ENCODE measurements at regions of chr6 and their contacts with region 1.

Region 1: DNA sequence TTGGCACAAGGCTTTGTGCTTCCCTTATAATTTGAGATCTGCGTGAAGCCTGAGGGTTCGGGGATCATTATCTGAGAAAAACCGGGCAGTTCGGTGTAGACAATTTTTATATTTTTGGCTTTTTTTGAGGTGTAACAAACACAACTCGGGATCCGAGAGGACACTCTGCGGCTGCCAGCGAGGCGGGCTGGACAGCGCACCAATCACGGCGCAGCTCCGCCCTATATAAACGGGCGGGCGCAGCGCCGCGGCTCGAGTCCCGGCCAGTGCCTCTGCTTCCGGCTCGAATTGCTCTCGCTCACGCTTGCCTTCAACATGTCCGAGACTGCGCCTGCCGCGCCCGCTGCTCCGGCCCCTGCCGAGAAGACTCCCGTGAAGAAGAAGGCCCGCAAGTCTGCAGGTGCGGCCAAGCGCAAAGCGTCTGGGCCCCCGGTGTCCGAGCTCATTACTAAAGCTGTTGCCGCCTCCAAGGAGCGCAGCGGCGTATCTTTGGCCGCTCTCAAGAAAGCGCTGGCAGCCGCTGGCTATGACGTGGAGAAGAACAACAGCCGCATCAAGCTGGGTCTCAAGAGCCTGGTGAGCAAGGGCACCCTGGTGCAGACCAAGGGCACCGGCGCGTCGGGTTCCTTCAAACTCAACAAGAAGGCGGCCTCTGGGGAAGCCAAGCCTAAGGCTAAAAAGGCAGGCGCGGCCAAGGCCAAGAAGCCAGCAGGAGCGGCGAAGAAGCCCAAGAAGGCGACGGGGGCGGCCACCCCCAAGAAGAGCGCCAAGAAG is 69.0 kb downstream of the HFE start:
- DNase-seq: peak; percentile 87
- ATAC-seq: peak; percentile 41
- H3K4me3 Mint-ChIP-seq: peak overlapping the region; percentile 88
- H3K27ac Mint-ChIP-seq: peak overlapping the region; percentile 93
- H3K4me1 Mint-ChIP-seq: peaks cover 36% of the 10 kb centered on the region
- H3K27me3 Mint-ChIP-seq: peaks cover 14% of the 10 kb centered on the region
- CTCF ChIP-seq: no peak

Region 2: GRCh38 chr6:26025894-26026832 is 130.1 kb before region 1 on chr6:
- CTCF ChIA-PET with region 1: no interaction called
- POLR2A ChIA-PET with region 1: interaction called, 149 read pairs
- intact Hi-C with region 1: no loop called
- DNase-seq: peak; percentile 97
- ATAC-seq: peak; percentile 41
- H3K4me3 Mint-ChIP-seq: peak overlapping the region; percentile 77
- H3K27ac Mint-ChIP-seq: peak overlapping the region; percentile 95
- H3K4me1 Mint-ChIP-seq: peaks cover 51% of the 10 kb centered on the region
- H3K27me3 Mint-ChIP-seq: peaks cover 2% of the 10 kb centered on the region
- CTCF ChIP-seq: peak; percentile 75

Region 3: DNA sequence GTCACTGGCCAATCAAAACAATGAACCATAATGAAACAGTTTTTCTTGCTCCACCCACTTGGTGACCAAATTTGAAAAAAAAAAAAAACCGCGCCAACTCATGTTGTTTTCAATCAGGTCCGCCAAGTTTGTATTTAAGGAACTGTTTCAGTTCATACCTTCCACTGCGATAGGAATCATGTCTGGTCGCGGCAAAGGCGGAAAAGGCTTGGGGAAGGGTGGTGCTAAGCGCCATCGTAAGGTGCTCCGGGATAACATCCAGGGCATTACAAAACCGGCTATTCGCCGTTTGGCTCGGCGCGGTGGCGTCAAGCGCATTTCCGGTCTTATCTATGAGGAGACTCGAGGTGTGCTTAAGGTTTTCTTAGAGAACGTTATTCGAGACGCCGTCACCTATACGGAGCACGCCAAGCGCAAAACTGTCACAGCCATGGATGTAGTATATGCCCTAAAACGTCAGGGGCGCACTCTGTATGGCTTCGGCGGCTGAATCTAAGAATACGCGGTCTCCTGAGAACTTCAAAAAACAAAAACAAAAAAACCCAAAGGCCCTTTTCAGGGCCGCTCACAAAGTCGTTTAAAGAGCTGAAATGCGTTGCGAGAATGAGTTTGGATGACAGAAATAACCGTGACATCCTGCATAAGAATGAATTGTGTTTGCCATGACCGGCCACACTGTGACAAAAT is 52.4 kb before region 1 on chr6:
- CTCF ChIA-PET with region 1: no interaction called
- POLR2A ChIA-PET with region 1: interaction called, 104 read pairs
- intact Hi-C with region 1: no loop called
- DNase-seq: peak; percentile 90
- ATAC-seq: peak; percentile 87
- H3K4me3 Mint-ChIP-seq: peak overlapping the region; percentile 85
- H3K27ac Mint-ChIP-seq: peak overlapping the region; percentile 98
- H3K4me1 Mint-ChIP-seq: peaks cover 15% of the 10 kb centered on the region
- H3K27me3 Mint-ChIP-seq: peaks cover 2% of the 10 kb centered on the region
- CTCF ChIP-seq: peak; percentile 46

Region 4: GRCh38 chr6:26175428-26176181 is 19.3 kb after region 1 on chr6:
- CTCF ChIA-PET with region 1: interaction called, 5 read pairs
- POLR2A ChIA-PET with region 1: interaction called, 286 read pairs
- intact Hi-C with region 1: no loop called
- DNase-seq: peak; percentile 72
- ATAC-seq: peak; percentile 17
- H3K4me3 Mint-ChIP-seq: peak overlapping the region; percentile 46
- H3K27ac Mint-ChIP-seq: peak overlapping the region; percentile 63
- H3K4me1 Mint-ChIP-seq: peaks cover 38% of the 10 kb centered on the region
- H3K27me3 Mint-ChIP-seq: no peaks in the 10 kb centered on the region
- CTCF ChIP-seq: peak; percentile 86

Region 5: DNA sequence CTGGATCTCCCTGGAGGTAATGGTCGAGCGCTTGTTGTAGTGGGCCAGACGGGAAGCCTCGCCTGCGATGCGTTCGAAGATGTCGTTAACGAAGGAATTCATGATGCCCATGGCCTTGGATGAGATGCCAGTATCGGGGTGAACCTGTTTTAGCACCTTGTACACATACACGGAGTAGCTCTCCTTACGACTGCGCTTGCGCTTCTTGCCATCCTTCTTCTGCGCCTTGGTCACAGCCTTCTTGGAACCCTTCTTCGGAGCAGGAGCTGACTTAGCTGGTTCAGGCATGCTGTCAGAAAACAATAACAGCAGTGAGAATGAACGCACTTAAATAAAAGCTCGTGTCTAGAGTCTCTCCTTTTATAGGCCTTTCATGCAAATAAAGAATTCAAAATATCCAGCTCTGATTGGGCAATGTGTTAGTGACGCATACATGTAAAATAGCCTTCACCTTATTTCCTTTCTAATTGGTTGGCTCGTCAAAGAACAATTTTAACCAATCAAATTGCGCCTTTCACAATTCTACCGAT is 60.2 kb after region 1 on chr6:
- CTCF ChIA-PET with region 1: interaction called, 3 read pairs
- POLR2A ChIA-PET with region 1: interaction called, 120 read pairs
- intact Hi-C with region 1: no loop called
- DNase-seq: peak; percentile 87
- ATAC-seq: peak; percentile 80
- H3K4me3 Mint-ChIP-seq: no peak overlapping the region
- H3K27ac Mint-ChIP-seq: no peak overlapping the region
- H3K4me1 Mint-ChIP-seq: peaks cover 11% of the 10 kb centered on the region
- H3K27me3 Mint-ChIP-seq: no peaks in the 10 kb centered on the region
- CTCF ChIP-seq: no peak

Region 6: DNA sequence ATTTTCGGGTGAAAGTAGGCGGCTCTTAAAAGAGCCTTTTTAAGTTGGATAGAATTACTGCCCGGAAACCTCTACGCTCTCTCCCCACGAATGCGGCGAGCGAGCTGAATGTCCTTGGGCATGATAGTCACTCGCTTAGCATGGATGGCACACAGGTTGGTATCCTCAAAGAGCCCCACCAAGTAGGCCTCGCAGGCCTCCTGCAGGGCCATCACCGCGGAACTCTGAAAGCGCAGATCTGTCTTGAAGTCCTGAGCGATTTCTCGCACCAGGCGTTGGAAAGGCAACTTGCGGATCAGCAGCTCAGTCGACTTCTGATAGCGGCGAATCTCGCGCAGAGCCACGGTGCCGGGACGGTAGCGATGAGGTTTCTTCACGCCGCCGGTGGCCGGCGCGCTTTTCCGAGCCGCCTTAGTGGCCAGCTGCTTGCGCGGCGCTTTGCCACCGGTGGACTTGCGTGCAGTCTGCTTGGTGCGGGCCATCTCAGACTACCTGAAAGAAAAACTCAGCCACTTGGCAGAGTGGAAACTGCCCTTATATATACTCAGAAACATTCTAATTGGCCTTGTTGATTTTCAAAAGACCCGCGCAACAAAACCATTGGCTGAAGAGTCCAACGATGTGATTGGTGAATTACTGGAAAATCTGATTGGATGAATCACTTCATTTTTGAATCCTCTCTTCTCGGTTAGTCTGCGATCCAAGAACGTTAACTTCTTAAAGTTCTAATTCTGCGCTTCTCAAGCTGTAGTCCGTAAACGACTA is 114.8 kb after region 1 on chr6:
- CTCF ChIA-PET with region 1: no interaction called
- POLR2A ChIA-PET with region 1: interaction called, 82 read pairs
- intact Hi-C with region 1: no loop called
- DNase-seq: peak; percentile 87
- ATAC-seq: peak; percentile 43
- H3K4me3 Mint-ChIP-seq: no peak overlapping the region
- H3K27ac Mint-ChIP-seq: no peak overlapping the region
- H3K4me1 Mint-ChIP-seq: peaks cover 18% of the 10 kb centered on the region
- H3K27me3 Mint-ChIP-seq: no peaks in the 10 kb centered on the region
- CTCF ChIP-seq: no peak

Measured in activated CD8-positive, alpha-beta T cell treated with anti-CD3 and anti-CD28 coated beads for 36 hours (primary cell).